ENCODE measurements at regions of chr4 and their contacts with region 1.

Region 1: GRCh38 chr4:25376754-25377571 is at the start of gene ANAPC4:
- DNase-seq: peak; percentile 94 to 98
- ATAC-seq: peak; percentile 97 to 99 (median 98)
- H3K4me3 ChIP-seq: peak within 1 kb of the TSS; percentile 68 to 98 (median 90)
- H3K27ac ChIP-seq: peak within 1 kb of the TSS; percentile 22 to 90 (median 78)
- H3K4me1 ChIP-seq: peaks cover 0 to 33% (median 17%) of the 10 kb centered on the region in 9 donors
- H3K27me3 ChIP-seq: no peaks in the 10 kb centered on the region
- CTCF ChIP-seq: peak in 4 of 9 donors; percentile 18 to 32 (median 28)
- total RNA-seq, gene ANAPC4: 9.9 to 13.8 (median 11.5) TPM

Region 2: GRCh38 chr4:25180524-25181131 is 196.3 kb before region 1 on chr4:
- intact Hi-C with region 1: loop called in 3 of 10 experiments (anchors 10 kb)
- DNase-seq: no peak
- ATAC-seq: peak in 4 of 8 donors; percentile 52 to 77 (median 66)
- H3K4me3 ChIP-seq: no peak overlapping the region
- H3K27ac ChIP-seq: no peak overlapping the region
- H3K4me1 ChIP-seq: peaks cover 0 to 4% (median 0%) of the 10 kb centered on the region in 9 donors
- H3K27me3 ChIP-seq: no peaks in the 10 kb centered on the region
- CTCF ChIP-seq: peak in 8 of 9 donors; percentile 16 to 67 (median 60)

Region 3: DNA sequence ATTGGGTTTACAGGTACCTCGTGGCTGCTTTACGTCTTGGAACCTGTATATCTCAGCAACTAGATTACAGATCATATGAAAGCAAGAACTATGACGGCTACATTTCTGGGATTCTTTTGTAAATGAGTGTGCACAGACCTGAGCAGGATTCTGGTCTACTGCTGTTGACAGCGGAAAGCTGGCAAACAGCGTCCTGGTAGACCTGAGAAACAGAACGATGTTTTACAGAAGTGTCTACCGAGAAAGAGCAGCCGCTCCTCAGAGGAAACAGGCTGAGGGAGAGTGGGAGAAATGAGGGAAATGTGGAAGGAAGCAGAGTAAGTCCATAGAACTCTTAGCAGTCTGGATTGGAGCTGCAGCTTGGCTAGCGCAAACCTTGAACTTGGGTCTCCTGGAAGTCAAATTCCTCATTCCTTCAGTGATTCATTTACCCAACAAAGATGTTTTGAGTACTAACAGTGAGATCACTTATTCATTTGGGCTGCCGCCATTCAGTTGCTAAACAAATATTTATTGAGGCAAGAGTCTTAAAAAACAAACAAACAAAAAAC is 434.3 kb after region 1 on chr4:
- intact Hi-C with region 1: no loop called
- DNase-seq: no peak
- ATAC-seq: no peak
- H3K4me3 ChIP-seq: no peak overlapping the region
- H3K27ac ChIP-seq: no peak overlapping the region
- H3K4me1 ChIP-seq: peaks cover 0 to 20% (median 14%) of the 10 kb centered on the region in 9 donors
- H3K27me3 ChIP-seq: no peaks in the 10 kb centered on the region
- CTCF ChIP-seq: no peak

Measured in heart right ventricle (tissue), 16 donors.